Naive thymus-derived CD4-positive, alpha-beta T cell (primary cell): ENCODE measurements at regions of chr16 and their contacts with region 1.

Region 1: DNA sequence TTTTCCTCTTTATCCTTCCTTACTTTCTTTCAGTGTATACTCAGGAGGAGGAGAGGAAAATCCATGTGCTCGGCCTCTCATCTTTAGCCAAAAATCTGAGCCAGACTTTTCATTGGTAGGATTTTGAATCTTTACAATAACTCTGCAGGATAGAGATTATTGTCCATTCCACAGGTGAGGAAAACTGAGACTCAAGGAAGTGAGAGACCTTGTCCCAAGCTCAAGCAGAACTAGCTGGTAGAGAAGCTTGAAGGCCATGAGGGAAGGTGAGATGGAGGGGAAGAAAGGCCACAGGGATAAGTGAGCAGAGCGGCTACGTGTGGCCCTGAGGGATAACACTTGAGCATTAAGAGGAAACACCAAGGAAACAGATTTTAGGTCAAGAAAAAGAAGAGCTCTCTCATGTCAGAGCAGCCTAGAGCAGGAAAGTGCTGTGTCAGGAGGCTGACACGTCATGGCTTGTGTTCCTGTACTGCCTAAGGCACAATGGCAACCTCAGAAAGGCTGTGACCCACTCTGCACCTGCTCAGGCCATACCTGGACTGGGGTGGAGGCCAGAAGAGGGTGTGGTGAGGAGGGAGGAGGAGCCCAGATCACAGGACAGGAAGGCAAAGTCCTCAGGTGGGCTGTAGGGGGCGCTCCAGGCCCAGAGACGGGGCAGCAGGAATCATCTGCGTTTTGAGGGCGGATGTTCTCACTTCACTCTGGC is 11.9 kb downstream of the MT4 start:
- DNase-seq: peak; percentile 81 to 92 (median 88)
- ATAC-seq: peak; percentile 100
- H3K4me3 ChIP-seq: no peak overlapping the region
- H3K4me3 Mint-ChIP-seq: no peak overlapping the region
- H3K27ac ChIP-seq: no peak overlapping the region
- H3K27ac Mint-ChIP-seq: peak overlapping the region; percentile 34 to 89 (median 76)
- H3K4me1 ChIP-seq: peaks cover 3 to 8% of the 10 kb centered on the region in 2 donors
- H3K4me1 Mint-ChIP-seq: peaks cover 0 to 9% (median 8%) of the 10 kb centered on the region in 7 donors
- H3K27me3 ChIP-seq: no peaks in the 10 kb centered on the region
- H3K27me3 Mint-ChIP-seq: peaks cover 0 to 19% (median 0%) of the 10 kb centered on the region in 5 donors

Region 2: GRCh38 chr16:56600398-56600999 is 23.8 kb after region 1 on chr16:
- CTCF ChIA-PET with region 1: interaction called, 4 read pairs
- POLR2A ChIA-PET with region 1: no interaction called
- intact Hi-C with region 1: loop called (anchors 1 to 2 kb)
- DNase-seq: peak in 1 of 9 donors; percentile 13
- ATAC-seq: peak; percentile 67
- H3K4me3 ChIP-seq: no peak overlapping the region
- H3K4me3 Mint-ChIP-seq: no peak overlapping the region
- H3K27ac ChIP-seq: no peak overlapping the region
- H3K27ac Mint-ChIP-seq: peak overlapping the region in 1 of 9 donors; percentile 7
- H3K4me1 ChIP-seq: no peaks in the 10 kb centered on the region
- H3K4me1 Mint-ChIP-seq: peaks cover 0 to 13% (median 5%) of the 10 kb centered on the region in 7 donors
- H3K27me3 ChIP-seq: no peaks in the 10 kb centered on the region
- H3K27me3 Mint-ChIP-seq: peaks cover 0 to 36% (median 3%) of the 10 kb centered on the region in 5 donors

Region 3: GRCh38 chr16:56625140-56625942 is 48.6 kb after region 1 on chr16 and contains the start of gene MT1E:
- CTCF ChIA-PET with region 1: no interaction called
- POLR2A ChIA-PET with region 1: no interaction called
- intact Hi-C with region 1: loop called in 1 of 2 experiments (anchors 5 kb)
- DNase-seq: peak in 7 of 9 donors; percentile 19 to 76 (median 41)
- ATAC-seq: peak; percentile 89
- H3K4me3 ChIP-seq: peak within 1 kb of the TSS; percentile 54
- H3K4me3 Mint-ChIP-seq: peak within 1 kb of the TSS; percentile 76 to 98 (median 90)
- H3K27ac ChIP-seq: peak within 1 kb of the TSS; percentile 15
- H3K27ac Mint-ChIP-seq: peak within 1 kb of the TSS; percentile 61 to 95 (median 82)
- H3K4me1 ChIP-seq: peaks cover 0 to 13% of the 10 kb centered on the region in 2 donors
- H3K4me1 Mint-ChIP-seq: peaks cover 11 to 27% (median 15%) of the 10 kb centered on the region in 7 donors
- H3K27me3 ChIP-seq: no peaks in the 10 kb centered on the region
- H3K27me3 Mint-ChIP-seq: peaks cover 6 to 13% (median 12%) of the 10 kb centered on the region in 5 donors
- total RNA-seq, gene MT1E: 0.45 to 166 (median 2.5) TPM in 4 of 5 experiments, not detected in the other

Region 4: DNA sequence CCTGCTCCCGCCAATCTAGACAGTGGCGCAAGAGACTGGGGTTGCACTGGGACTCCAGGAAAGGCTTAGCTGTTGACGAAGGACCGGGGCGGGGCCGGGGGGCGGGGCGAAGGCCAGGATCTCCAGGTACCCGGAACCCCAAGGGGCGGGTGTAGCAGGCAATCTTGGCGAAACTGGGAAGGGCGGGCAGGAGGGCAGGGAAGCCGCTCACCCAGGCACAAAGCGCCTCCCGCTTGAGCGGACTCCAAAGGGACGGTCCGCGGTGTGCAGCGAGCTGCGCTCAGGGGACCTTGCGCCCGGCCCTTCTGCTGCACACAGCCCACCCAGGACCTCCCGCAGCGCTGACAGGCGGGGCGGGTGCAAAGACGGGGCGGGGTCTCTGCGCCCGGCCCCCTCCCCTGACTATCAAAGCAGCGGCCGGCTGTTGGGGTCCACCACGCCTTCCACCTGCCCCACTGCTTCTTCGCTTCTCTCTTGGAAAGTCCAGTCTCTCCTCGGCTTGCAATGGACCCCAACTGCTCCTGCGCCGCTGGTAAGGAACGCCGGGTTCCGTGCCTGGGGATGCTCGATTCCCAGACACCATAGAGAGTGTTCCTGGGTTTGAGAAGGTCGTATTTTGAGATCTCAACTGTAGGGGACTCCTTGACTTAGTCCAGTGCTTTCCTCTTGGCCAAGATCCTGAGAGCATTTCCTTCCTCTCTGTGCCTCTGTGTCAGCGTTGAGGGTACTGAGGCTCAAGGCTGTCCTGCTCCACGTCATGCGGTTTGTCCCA is 81.0 kb after region 1 on chr16 and contains the start of gene MT1F:
- CTCF ChIA-PET with region 1: interaction called, 11 read pairs
- POLR2A ChIA-PET with region 1: no interaction called
- intact Hi-C with region 1: no loop called
- DNase-seq: peak in 8 of 9 donors; percentile 35 to 66 (median 56)
- ATAC-seq: peak; percentile 80
- H3K4me3 ChIP-seq: peak within 1 kb of the TSS; percentile 91
- H3K4me3 Mint-ChIP-seq: peak within 1 kb of the TSS; percentile 79 to 99 (median 94)
- H3K27ac ChIP-seq: peak within 1 kb of the TSS; percentile 64
- H3K27ac Mint-ChIP-seq: peak within 1 kb of the TSS; percentile 67 to 97 (median 94)
- H3K4me1 ChIP-seq: peaks cover 7 to 12% of the 10 kb centered on the region in 2 donors
- H3K4me1 Mint-ChIP-seq: peaks cover 14 to 46% (median 27%) of the 10 kb centered on the region in 7 donors
- H3K27me3 ChIP-seq: no peaks in the 10 kb centered on the region
- H3K27me3 Mint-ChIP-seq: peaks cover 0 to 21% (median 0%) of the 10 kb centered on the region in 5 donors
- total RNA-seq, gene MT1F: 5.6 to 20.6 (median 8.7) TPM

Region 5: GRCh38 chr16:56681939-56682702 is 105.4 kb after region 1 on chr16 and contains the start of gene MT1X:
- CTCF ChIA-PET with region 1: interaction called, 3 read pairs
- POLR2A ChIA-PET with region 1: interaction called, 7 read pairs
- intact Hi-C with region 1: loop called in 1 of 2 experiments (anchors 1 kb)
- DNase-seq: peak; percentile 77 to 94 (median 88)
- ATAC-seq: peak; percentile 100
- H3K4me3 ChIP-seq: peak within 1 kb of the TSS; percentile 93
- H3K4me3 Mint-ChIP-seq: peak within 1 kb of the TSS; percentile 86 to 99 (median 96)
- H3K27ac ChIP-seq: peak within 1 kb of the TSS; percentile 81
- H3K27ac Mint-ChIP-seq: peak within 1 kb of the TSS; percentile 89 to 99 (median 95)
- H3K4me1 ChIP-seq: peaks cover 13 to 15% of the 10 kb centered on the region in 2 donors
- H3K4me1 Mint-ChIP-seq: peaks cover 0 to 28% (median 25%) of the 10 kb centered on the region in 7 donors
- H3K27me3 ChIP-seq: no peaks in the 10 kb centered on the region
- H3K27me3 Mint-ChIP-seq: peaks cover 0 to 2% (median 0%) of the 10 kb centered on the region in 5 donors
- total RNA-seq, gene MT1X: 15.0 to 70.7 (median 25.9) TPM

Region 6: DNA sequence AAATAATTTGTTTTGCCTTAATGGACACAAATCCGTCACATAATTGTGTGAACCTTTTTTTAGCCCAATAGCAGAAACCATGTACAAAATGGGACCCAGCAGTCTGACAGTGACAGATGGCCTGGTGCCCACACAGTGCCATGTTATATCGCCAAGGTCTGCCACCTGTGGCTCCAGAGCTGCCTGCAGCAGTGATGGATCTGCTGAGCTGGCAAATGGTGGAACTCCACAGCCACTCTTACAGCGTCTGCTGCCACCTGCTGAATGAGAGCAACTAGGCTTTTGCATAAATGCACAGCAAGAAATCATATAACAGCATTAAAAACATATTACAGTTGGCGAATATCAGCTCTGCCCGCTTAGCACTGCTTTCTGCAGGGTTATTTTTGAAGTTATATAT is 212.6 kb after region 1 on chr16:
- CTCF ChIA-PET with region 1: interaction called, 3 read pairs
- POLR2A ChIA-PET with region 1: no interaction called
- intact Hi-C with region 1: loop called (anchors 1 kb)
- DNase-seq: peak in 3 of 9 donors; percentile 14 to 33 (median 14)
- ATAC-seq: peak; percentile 50
- H3K4me3 ChIP-seq: no peak overlapping the region
- H3K4me3 Mint-ChIP-seq: no peak overlapping the region
- H3K27ac ChIP-seq: no peak overlapping the region
- H3K27ac Mint-ChIP-seq: no peak overlapping the region
- H3K4me1 ChIP-seq: no peaks in the 10 kb centered on the region
- H3K4me1 Mint-ChIP-seq: peaks cover 0 to 10% (median 0%) of the 10 kb centered on the region in 7 donors
- H3K27me3 ChIP-seq: no peaks in the 10 kb centered on the region
- H3K27me3 Mint-ChIP-seq: no peaks in the 10 kb centered on the region

Region 7: GRCh38 chr16:56950881-56951771 is 374.4 kb after region 1 on chr16:
- CTCF ChIA-PET with region 1: interaction called, 3 read pairs
- POLR2A ChIA-PET with region 1: no interaction called
- intact Hi-C with region 1: loop called in 1 of 2 experiments (anchors 1 kb)
- DNase-seq: peak in 7 of 9 donors; percentile 20 to 62 (median 39)
- ATAC-seq: peak; percentile 81
- H3K4me3 ChIP-seq: no peak overlapping the region
- H3K4me3 Mint-ChIP-seq: no peak overlapping the region
- H3K27ac ChIP-seq: no peak overlapping the region
- H3K27ac Mint-ChIP-seq: peak overlapping the region in 5 of 9 donors; percentile 5 to 84 (median 16)
- H3K4me1 ChIP-seq: no peaks in the 10 kb centered on the region
- H3K4me1 Mint-ChIP-seq: peaks cover 0 to 18% (median 7%) of the 10 kb centered on the region in 7 donors
- H3K27me3 ChIP-seq: no peaks in the 10 kb centered on the region
- H3K27me3 Mint-ChIP-seq: no peaks in the 10 kb centered on the region